ENCODE measurements at regions of chr1 and their contacts with region 1.

Region 1: DNA sequence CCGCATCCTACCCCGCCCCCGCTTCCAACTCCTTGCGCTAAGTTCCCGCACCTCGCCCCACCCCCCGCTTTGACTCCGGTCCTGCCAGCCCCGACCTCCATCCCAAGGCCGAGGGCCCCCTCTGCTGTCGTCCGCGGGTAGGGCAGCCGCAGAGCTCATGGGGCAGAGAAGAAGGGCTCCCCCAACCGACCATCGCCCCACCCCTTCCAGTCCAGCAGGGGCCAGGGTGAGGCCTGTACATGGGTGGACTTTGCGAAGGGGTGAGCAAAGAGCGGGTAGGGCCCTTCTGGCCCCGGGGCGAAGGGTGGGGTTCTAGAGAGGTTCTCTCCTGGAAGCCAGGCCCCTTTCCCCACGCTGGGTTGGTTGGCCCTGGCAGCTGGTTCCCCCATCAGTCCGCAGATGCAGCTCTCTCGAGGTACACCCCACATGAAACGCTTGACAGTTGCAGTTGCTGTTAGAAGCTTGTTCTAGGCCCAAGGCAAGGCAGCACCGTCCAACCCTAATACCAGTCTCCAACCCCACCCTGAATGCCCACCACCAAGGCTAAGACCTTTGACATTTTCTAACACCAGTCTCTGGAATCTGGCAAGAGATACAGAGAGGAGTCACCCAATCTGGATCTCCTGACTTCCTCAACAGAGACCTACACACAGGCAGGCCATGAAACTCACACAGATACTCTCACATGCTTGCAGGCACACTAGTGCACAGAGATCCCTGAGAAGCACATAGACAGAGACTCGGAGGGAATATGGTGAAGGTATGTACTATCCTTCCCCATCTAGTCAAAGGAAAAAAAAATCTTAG is 25.3 kb upstream of the ADGRB2 start:
- DNase-seq: peak; percentile 100
- ATAC-seq: peak; percentile 82
- H3K4me3 Mint-ChIP-seq: peak overlapping the region; percentile 83
- H3K27ac Mint-ChIP-seq: no peak overlapping the region
- H3K4me1 Mint-ChIP-seq: peaks cover 11% of the 10 kb centered on the region
- H3K27me3 Mint-ChIP-seq: no peaks in the 10 kb centered on the region
- CTCF ChIP-seq: peak; percentile 70

Region 2: DNA sequence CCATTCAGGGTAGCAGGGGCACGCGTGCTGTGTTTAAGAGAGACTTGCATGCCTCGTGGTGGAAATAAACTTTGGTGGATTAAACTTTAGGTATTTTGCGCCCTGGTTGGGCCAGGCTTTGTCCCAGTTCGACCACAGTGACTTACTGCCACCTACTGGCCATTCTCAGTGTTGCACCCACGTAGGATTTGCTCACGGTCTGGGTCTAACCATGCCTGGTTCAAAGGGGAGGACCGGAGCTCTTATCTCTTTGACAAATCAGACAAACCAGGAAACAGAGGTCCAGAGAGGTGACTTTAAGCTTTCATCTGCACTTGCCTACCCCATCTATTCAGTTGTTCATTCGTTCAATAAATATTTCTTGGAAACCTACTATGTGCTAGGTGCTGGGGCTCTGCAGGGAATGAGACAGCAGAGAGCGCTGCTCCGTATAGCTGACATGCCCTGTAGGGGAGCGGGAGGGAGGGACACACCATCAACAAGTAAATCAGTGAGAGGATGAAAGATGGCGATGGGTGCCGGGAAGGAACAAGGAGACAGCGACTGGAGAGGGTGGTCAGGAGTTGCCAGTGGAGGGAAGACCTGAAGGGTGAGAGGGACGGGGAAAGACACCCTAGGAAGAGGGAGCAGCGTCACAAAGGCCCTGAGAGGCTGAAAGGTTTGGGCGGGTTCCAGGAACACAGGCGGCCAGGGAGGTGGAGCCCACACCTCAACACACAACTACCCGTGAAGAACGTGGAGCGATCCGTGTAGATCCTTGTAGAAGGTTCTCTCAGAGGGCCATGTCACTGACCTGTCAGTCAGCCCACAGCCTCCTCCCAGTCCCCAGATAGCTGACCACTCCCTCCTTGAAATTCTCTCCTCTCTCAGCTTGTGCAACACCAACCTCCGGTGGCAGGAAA is 240.3 kb before region 1 on chr1:
- CTCF ChIA-PET with region 1: interaction called, 22 read pairs
- POLR2A ChIA-PET with region 1: no interaction called
- DNase-seq: peak; percentile 93
- ATAC-seq: peak; percentile 89
- H3K4me3 Mint-ChIP-seq: peak overlapping the region; percentile 81
- H3K27ac Mint-ChIP-seq: no peak overlapping the region
- H3K4me1 Mint-ChIP-seq: peaks cover 14% of the 10 kb centered on the region; the same call in 1 of the 2 replicates
- H3K27me3 Mint-ChIP-seq: no peaks in the 10 kb centered on the region
- CTCF ChIP-seq: peak; percentile 91

Region 3: DNA sequence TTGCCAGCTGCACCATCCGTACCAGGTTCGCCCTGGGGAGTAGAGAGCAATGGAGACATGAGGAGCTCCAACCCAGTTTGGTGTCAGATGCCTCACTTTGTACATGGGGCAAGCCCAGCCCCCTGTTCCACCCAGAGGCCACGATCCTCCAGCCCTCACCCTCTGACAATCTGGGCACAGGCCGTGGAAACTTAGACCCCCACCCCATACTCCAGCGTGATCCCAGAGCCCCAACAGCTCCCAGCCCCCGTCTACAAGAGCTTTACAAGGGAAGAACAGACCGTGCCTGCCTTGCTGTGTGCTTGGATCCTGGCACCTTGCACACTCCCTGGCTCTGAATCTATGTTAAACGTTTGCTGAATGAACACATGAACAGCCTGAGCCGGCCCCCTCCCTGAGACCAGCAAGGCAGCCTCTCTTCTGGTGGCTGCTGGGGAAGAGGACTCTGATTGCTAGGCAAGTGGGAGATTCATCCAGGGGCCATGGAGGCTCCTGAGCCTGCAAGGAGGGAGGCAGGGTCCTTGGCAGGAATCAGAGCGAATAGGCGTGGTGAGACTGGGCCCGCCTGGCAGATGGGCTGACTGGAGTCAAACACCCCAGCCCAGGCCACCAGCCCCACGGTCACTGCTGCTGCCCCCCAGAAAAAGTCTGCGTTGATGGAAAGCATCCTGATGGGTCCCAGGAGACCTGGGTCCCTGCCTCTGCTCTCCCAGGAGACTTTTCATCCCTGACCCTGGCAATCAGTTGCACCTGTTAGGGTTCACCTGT is 132.2 kb before region 1 on chr1:
- CTCF ChIA-PET with region 1: interaction called, 90 read pairs
- POLR2A ChIA-PET with region 1: no interaction called
- DNase-seq: no peak
- ATAC-seq: no peak
- H3K4me3 Mint-ChIP-seq: no peak overlapping the region
- H3K27ac Mint-ChIP-seq: no peak overlapping the region
- H3K4me1 Mint-ChIP-seq: no peaks in the 10 kb centered on the region
- H3K27me3 Mint-ChIP-seq: no peaks in the 10 kb centered on the region
- CTCF ChIP-seq: no peak

Region 4: GRCh38 chr1:31699341-31699891 is 90.0 kb before region 1 on chr1:
- CTCF ChIA-PET with region 1: interaction called, 47 read pairs
- POLR2A ChIA-PET with region 1: no interaction called
- DNase-seq: no peak
- ATAC-seq: no peak
- H3K4me3 Mint-ChIP-seq: no peak overlapping the region
- H3K27ac Mint-ChIP-seq: no peak overlapping the region
- H3K4me1 Mint-ChIP-seq: peaks cover 14% of the 10 kb centered on the region
- H3K27me3 Mint-ChIP-seq: peaks cover 3% of the 10 kb centered on the region
- CTCF ChIP-seq: no peak

Region 5: GRCh38 chr1:31736671-31737070 is 52.8 kb before region 1 on chr1:
- CTCF ChIA-PET with region 1: interaction called, 24 read pairs
- POLR2A ChIA-PET with region 1: no interaction called
- DNase-seq: no peak
- ATAC-seq: no peak
- H3K4me3 Mint-ChIP-seq: no peak overlapping the region
- H3K27ac Mint-ChIP-seq: no peak overlapping the region
- H3K4me1 Mint-ChIP-seq: peaks cover 5% of the 10 kb centered on the region
- H3K27me3 Mint-ChIP-seq: no peaks in the 10 kb centered on the region
- CTCF ChIP-seq: no peak

Region 6: GRCh38 chr1:31771891-31772668 is 17.4 kb before region 1 on chr1:
- CTCF ChIA-PET with region 1: interaction called, 282 read pairs
- POLR2A ChIA-PET with region 1: interaction called, 5 read pairs
- DNase-seq: no peak
- ATAC-seq: peak; percentile 38
- H3K4me3 Mint-ChIP-seq: peak overlapping the region; percentile 73
- H3K27ac Mint-ChIP-seq: peak overlapping the region; percentile 49; the same call in 1 of the 2 replicates
- H3K4me1 Mint-ChIP-seq: peaks cover 45% of the 10 kb centered on the region
- H3K27me3 Mint-ChIP-seq: peaks cover 56% of the 10 kb centered on the region
- CTCF ChIP-seq: no peak

Region 7: DNA sequence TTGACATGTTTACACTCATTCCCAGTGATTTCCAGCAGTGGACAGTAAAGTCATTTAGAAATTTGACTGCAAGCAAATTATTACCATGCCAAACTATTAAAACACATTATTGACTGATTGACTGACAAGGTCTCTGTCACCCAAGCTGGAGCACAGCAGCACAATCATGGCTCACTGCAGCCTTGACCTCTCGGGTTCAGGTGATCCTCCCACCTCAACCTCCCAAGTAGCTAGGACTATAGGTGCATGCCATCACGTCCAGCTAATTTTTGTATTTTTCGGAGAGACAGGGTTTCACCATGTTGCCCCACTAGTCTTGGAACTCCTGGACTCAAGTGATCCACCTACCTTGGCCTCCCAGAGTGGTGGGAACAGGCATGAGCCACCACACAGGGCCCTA is 124.5 kb after region 1 on chr1:
- CTCF ChIA-PET with region 1: no interaction called
- POLR2A ChIA-PET with region 1: no interaction called
- DNase-seq: no peak
- ATAC-seq: no peak
- H3K4me3 Mint-ChIP-seq: no peak overlapping the region
- H3K27ac Mint-ChIP-seq: no peak overlapping the region
- H3K4me1 Mint-ChIP-seq: no peaks in the 10 kb centered on the region
- H3K27me3 Mint-ChIP-seq: no peaks in the 10 kb centered on the region
- CTCF ChIP-seq: no peak

Region 8: DNA sequence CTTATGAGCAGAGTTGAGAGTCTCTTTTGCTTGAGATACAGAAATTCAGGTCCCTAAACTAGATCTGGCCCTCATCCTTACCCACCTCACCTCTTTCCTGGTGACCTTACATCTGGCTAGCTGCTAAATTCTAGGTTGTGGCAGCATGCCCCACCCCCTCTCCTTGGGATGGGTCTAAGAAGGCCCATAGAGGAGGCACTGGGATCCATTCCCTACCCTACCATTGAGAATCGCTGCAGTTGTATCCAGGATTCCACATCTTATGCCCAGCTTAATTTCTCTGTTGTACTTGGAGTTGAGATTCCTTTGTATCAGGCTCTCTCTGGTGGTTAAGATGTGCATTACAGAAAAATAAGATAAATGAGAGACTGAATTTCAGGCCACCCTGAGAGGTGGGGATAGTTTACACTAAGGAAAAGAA is 273.8 kb after region 1 on chr1:
- CTCF ChIA-PET with region 1: interaction called, 11 read pairs
- POLR2A ChIA-PET with region 1: no interaction called
- DNase-seq: no peak
- ATAC-seq: peak; percentile 25
- H3K4me3 Mint-ChIP-seq: no peak overlapping the region
- H3K27ac Mint-ChIP-seq: no peak overlapping the region; the same call in none of the 2 replicates
- H3K4me1 Mint-ChIP-seq: peaks cover 49% of the 10 kb centered on the region
- H3K27me3 Mint-ChIP-seq: no peaks in the 10 kb centered on the region
- CTCF ChIP-seq: no peak

Measured in WTC11 (cell line).